ENCODE measurements at regions of chr1 and their contacts with region 1.

Region 1: GRCh38 chr1:15994590-15995351 is 9.3 kb upstream of the SRARP start:
- DNase-seq: peak; percentile 65 to 84 (median 80)
- H3K4me3 ChIP-seq: no peak overlapping the region
- H3K27ac ChIP-seq: no peak overlapping the region
- H3K4me1 ChIP-seq: no peaks in the 10 kb centered on the region
- H3K27me3 ChIP-seq: no peaks in the 10 kb centered on the region
- CTCF ChIP-seq: peak; percentile 76 to 94 (median 88)
- POLR2A ChIP-seq: no peak

Region 2: DNA sequence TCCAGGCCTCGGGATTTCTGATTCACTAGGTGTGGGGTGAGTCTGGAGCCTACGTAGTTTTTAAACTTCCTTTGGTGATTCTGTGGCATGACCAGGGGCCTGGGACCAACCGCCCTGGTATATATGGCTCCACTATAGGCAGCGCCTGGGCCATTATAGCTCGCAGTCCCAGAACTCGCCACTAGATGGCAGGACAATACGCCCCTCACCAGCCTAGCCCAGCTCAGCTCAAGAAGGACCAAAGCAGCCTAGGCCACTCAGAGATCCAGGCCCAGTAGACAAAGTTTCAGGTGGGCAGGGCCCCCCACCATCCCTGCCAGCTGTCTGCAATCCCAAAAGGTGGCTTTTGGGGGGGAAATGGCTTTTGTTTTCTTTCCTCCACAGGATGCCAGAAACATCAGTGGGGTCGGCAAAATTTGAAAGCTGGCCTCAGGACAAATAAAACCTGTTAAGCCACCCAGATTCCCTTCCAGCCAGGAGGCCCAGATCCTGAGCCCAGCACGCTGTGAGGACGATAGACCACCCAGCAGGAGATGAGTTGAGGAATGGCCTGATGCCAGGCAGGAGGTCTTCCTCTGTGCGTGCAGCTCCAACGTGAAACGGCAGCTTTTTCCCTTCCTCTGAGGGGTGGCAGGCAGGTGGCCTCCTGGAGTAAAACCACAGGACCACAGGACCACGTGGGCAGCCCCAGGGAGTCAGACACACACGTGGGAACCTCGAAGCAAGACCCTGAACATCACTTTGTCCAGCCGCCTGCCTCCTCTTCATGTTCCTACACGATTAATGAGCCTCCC is 866.1 kb before region 1 on chr1:
- intact Hi-C with region 1: no loop called
- DNase-seq: peak; percentile 51 to 92 (median 79)
- H3K4me3 ChIP-seq: no peak overlapping the region
- H3K27ac ChIP-seq: no peak overlapping the region
- H3K4me1 ChIP-seq: no peaks in the 10 kb centered on the region
- H3K27me3 ChIP-seq: no peaks in the 10 kb centered on the region
- CTCF ChIP-seq: peak; percentile 84 to 94 (median 91)
- POLR2A ChIP-seq: no peak

Region 3: GRCh38 chr1:15803354-15803753 is 191.4 kb before region 1 on chr1:
- intact Hi-C with region 1: loop called in 1 of 2 experiments (anchors 5 kb)
- DNase-seq: no peak
- H3K4me3 ChIP-seq: no peak overlapping the region
- H3K27ac ChIP-seq: no peak overlapping the region
- H3K4me1 ChIP-seq: peaks cover 15 to 20% of the 10 kb centered on the region in 2 donors
- H3K27me3 ChIP-seq: no peaks in the 10 kb centered on the region
- CTCF ChIP-seq: peak; percentile 5 to 43 (median 40)
- POLR2A ChIP-seq: no peak

Region 4: DNA sequence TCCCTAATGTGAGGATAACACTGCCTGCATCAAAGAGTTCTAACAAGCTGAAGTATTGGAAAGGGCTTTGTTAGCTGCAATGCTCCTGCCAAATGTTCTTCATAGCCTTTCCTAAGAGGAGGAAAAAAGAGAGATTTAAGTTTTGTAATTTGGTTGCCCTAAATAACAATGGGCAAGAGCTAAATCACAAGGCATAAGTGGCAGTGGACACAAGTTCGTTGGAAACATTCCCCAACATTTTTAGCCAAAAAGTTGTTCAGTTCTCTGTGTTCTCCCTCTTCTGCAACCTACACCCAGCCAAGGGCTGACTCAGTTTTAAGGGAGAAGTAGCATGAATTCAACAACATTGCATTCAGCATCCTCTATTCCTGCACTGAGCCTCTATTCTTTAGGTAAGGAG is 184.7 kb before region 1 on chr1:
- intact Hi-C with region 1: loop called (anchors 5 kb)
- DNase-seq: no peak
- H3K4me3 ChIP-seq: no peak overlapping the region
- H3K27ac ChIP-seq: no peak overlapping the region
- H3K4me1 ChIP-seq: no peaks in the 10 kb centered on the region
- H3K27me3 ChIP-seq: no peaks in the 10 kb centered on the region
- CTCF ChIP-seq: no peak
- POLR2A ChIP-seq: no peak

Region 5: DNA sequence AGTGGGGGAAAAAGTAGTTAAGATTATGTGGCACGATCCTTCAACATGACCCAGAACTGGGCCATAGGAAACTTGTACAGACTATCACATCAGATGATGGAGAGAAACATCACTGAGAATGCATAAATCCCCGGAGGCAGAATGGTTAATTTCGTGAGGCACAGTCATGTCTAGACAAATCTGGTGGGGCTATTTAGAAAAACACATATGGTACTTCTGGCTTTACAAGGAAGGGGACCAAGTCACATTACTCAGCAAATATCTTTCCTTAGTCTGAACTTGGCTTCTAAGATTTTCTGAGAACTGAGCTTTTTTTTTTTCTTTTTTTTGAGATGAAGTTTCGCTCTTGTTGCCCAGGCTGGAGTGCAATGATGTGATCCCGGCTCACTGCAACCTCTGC is 178.1 kb before region 1 on chr1:
- intact Hi-C with region 1: loop called (anchors 5 kb)
- DNase-seq: no peak
- H3K4me3 ChIP-seq: no peak overlapping the region
- H3K27ac ChIP-seq: no peak overlapping the region
- H3K4me1 ChIP-seq: peaks cover 0 to 6% of the 10 kb centered on the region in 2 donors
- H3K27me3 ChIP-seq: no peaks in the 10 kb centered on the region
- CTCF ChIP-seq: no peak
- POLR2A ChIP-seq: no peak